ENCODE measurements at regions of chr16 and their contacts with region 1.

Region 1: GRCh38 chr16:77450563-77451487 is 16.0 kb upstream of the ADAMTS18 start:
- DNase-seq: no peak

Region 2: GRCh38 chr16:77250400-77250799 is 200.4 kb before region 1 on chr16:
- in situ Hi-C with region 1: no loop called
- DNase-seq: no peak

Region 3: DNA sequence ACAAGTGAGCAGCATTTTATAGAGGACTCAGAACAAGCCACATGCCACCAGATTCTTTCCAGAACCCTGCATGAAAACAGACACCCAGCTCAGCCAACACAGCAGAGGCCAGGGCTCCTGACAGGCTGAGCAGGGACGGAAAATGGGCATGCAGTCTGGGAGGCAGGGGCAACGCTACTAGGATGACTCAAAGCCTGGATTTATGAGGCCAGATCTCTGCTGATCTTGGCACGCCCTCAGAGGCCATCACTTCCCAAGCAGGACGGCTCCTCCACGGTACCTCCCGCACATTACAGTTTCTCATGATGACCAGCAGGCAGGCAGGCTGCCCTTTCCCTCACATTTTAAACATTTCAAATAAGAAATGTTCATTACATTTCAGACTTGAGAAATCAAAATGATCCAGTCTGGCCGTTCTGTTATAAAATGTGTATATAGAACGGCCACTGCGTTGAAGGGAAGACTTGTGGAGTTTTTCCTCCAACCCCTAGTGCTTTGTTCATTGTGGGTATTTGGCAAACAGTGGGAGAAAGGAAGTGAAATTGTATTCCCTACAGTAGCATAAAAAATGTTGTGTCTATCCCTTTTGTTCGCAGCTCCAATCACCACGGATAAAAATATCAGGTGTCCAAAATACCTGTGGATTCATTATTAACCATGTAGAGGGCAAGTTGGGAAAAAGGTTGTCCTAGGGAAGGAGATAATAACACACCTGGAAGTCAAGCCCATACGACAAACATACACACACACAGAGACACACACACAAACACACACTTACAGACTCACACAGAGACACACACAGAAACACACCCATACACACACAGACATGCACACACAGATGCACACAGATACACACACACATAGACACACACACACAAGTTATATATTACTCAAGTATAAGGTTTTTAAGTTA is 48.8 kb after region 1 on chr16:
- in situ Hi-C with region 1: loop called (anchors 10 kb)
- DNase-seq: no peak